HEK293 (cell line): ENCODE measurements at regions of chr19 and their contacts with region 1.

Region 1: GRCh38 chr19:33235269-33235995 is 9.8 kb upstream of the SLC7A10 start:
- H3K4me3 ChIP-seq: no peak overlapping the region
- H3K27ac ChIP-seq: no peak overlapping the region
- H3K4me1 ChIP-seq: peaks cover 2% of the 10 kb centered on the region; the same call in 1 of the 2 replicates
- CTCF ChIP-seq: peak; percentile 88

Region 2: GRCh38 chr19:33143897-33144405 is 91.5 kb before region 1 on chr19:
- CTCF ChIA-PET with region 1: interaction called, 24 read pairs
- POLR2A ChIA-PET with region 1: no interaction called
- H3K4me3 ChIP-seq: no peak overlapping the region
- H3K27ac ChIP-seq: no peak overlapping the region
- H3K4me1 ChIP-seq: peaks cover 3% of the 10 kb centered on the region; the same call in 1 of the 2 replicates
- CTCF ChIP-seq: peak; percentile 99

Region 3: GRCh38 chr19:33260628-33261418 is 25.4 kb after region 1 on chr19:
- CTCF ChIA-PET with region 1: interaction called, 36 read pairs
- POLR2A ChIA-PET with region 1: no interaction called
- H3K4me3 ChIP-seq: no peak overlapping the region
- H3K27ac ChIP-seq: no peak overlapping the region
- H3K4me1 ChIP-seq: no peaks in the 10 kb centered on the region; the same call in 1 of the 2 replicates
- CTCF ChIP-seq: no peak

Region 4: GRCh38 chr19:33340991-33341390 is 105.6 kb after region 1 on chr19:
- CTCF ChIA-PET with region 1: no interaction called
- POLR2A ChIA-PET with region 1: no interaction called
- H3K4me3 ChIP-seq: no peak overlapping the region
- H3K27ac ChIP-seq: no peak overlapping the region
- H3K4me1 ChIP-seq: peaks cover 3% of the 10 kb centered on the region; the same call in 1 of the 2 replicates
- CTCF ChIP-seq: no peak

Region 5: GRCh38 chr19:33373701-33374421 is 138.4 kb after region 1 on chr19 and contains the start of gene CEBPG:
- CTCF ChIA-PET with region 1: interaction called, 26 read pairs
- POLR2A ChIA-PET with region 1: interaction called, 3 read pairs
- H3K4me3 ChIP-seq: peak within 1 kb of the TSS; percentile 82
- H3K27ac ChIP-seq: peak within 1 kb of the TSS; percentile 100
- H3K4me1 ChIP-seq: peaks cover 47% of the 10 kb centered on the region
- CTCF ChIP-seq: peak; percentile 80

Region 6: DNA sequence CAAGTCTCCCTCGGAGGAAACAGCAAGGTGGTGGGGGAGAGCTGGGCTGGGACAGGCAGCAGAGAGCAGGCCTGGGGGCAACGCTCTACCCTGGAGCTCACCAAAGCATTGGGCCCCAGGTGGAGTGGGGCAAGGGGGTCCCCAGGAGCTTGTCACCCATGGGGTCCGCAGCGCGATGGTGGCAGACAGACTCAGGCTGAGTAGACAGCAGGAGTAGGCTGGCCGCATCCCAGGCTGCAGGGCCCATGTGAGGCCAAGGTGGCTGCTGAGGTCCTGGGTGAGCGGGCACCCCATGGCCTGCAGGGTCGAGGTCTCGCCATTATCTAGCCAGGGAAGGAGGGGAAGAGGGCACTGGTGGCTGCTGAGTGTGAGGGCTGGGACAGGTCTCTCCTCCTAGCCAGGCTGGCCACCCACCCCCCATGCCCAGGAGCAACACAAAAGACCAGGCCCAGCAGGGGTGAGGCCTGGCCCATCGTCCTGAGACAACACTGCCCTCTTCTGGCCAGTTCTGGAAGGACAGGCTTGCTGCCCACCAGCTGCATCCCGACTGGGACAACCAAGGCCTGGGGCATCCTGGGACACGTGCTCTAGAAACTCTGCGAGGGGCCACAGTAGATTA is 171.2 kb after region 1 on chr19:
- CTCF ChIA-PET with region 1: interaction called, 292 read pairs
- POLR2A ChIA-PET with region 1: interaction called, 3 read pairs
- H3K4me3 ChIP-seq: no peak overlapping the region
- H3K27ac ChIP-seq: no peak overlapping the region
- H3K4me1 ChIP-seq: no peaks in the 10 kb centered on the region
- CTCF ChIP-seq: peak; percentile 99